ENCODE measurements at regions of chr12 and their contacts with region 1.

Region 1: GRCh38 chr12:26097046-26097878 is 27.6 kb downstream of the BHLHE41 start:
- DNase-seq: peak; percentile 79
- H3K4me3 Mint-ChIP-seq: no peak overlapping the region
- H3K27ac Mint-ChIP-seq: no peak overlapping the region
- H3K4me1 Mint-ChIP-seq: peaks cover 14% of the 10 kb centered on the region
- H3K27me3 Mint-ChIP-seq: no peaks in the 10 kb centered on the region
- CTCF ChIP-seq: peak; percentile 84

Region 2: GRCh38 chr12:25866586-25867378 is 230.5 kb before region 1 on chr12:
- CTCF ChIA-PET with region 1: interaction called, 11 read pairs
- intact Hi-C with region 1: no loop called
- DNase-seq: no peak
- H3K4me3 Mint-ChIP-seq: no peak overlapping the region
- H3K27ac Mint-ChIP-seq: no peak overlapping the region
- H3K4me1 Mint-ChIP-seq: peaks cover 3% of the 10 kb centered on the region
- H3K27me3 Mint-ChIP-seq: no peaks in the 10 kb centered on the region
- CTCF ChIP-seq: no peak

Region 3: GRCh38 chr12:26153421-26154154 is 56.3 kb after region 1 on chr12:
- CTCF ChIA-PET with region 1: no interaction called
- intact Hi-C with region 1: loop called (anchors 2 kb)
- DNase-seq: peak; percentile 49
- H3K4me3 Mint-ChIP-seq: no peak overlapping the region
- H3K27ac Mint-ChIP-seq: peak overlapping the region; percentile 6
- H3K4me1 Mint-ChIP-seq: peaks cover 52% of the 10 kb centered on the region
- H3K27me3 Mint-ChIP-seq: no peaks in the 10 kb centered on the region
- CTCF ChIP-seq: no peak

Region 4: DNA sequence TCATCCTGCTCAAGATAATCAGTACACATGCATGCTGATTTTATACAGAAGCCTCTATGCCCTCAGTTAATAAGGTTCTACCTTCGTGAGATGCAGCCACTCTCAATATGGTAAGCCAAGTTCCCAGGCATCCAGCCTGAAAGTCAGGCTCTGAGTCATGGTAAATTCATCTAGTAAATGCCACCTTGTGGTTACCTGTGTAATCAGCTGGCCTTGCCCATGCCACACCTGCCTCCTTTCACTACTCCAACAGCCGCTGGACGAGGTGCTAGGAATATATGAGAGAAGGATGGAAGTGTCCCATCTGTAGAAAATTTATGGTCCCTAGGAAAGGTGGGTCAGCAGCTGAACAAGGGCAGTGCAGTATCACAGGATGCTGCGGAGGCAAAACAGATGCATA is 305.4 kb after region 1 on chr12:
- CTCF ChIA-PET with region 1: no interaction called
- intact Hi-C with region 1: loop called (anchors 1 kb)
- DNase-seq: peak; percentile 71
- H3K4me3 Mint-ChIP-seq: no peak overlapping the region
- H3K27ac Mint-ChIP-seq: no peak overlapping the region
- H3K4me1 Mint-ChIP-seq: no peaks in the 10 kb centered on the region
- H3K27me3 Mint-ChIP-seq: no peaks in the 10 kb centered on the region
- CTCF ChIP-seq: peak; percentile 48

Region 5: DNA sequence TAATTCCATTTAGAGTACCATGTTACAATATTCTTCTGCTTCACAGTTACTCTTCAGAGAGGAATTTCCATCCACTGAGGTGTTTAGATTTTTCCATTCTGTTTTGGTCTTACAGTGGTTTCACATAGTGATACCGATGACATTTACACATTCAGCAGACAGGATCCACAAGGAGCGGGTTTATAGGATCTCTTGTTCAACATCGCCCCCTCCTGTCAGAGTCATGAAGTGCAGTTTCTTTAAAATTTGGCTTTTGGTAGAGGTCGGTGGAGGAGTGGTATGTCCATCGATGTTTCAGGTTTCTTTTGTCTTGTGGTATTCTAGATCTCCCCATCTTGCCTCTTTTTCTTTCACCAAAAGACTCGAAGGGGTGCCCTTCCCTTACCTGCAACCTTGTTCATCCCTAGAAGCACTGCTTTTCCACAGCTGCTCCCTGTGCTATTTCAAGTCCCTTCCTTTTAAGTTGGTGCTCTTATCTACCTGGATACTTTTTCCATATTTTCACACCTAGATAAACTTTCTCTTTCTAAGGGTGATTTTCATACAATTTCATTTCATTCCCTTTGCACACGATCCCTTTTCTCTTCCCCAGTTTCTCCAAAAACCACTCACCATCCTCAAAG is 554.4 kb after region 1 on chr12:
- CTCF ChIA-PET with region 1: no interaction called
- intact Hi-C with region 1: loop called (anchors 1 kb)
- DNase-seq: peak; percentile 74
- H3K4me3 Mint-ChIP-seq: no peak overlapping the region
- H3K27ac Mint-ChIP-seq: no peak overlapping the region
- H3K4me1 Mint-ChIP-seq: peaks cover 27% of the 10 kb centered on the region
- H3K27me3 Mint-ChIP-seq: no peaks in the 10 kb centered on the region
- CTCF ChIP-seq: peak; percentile 85